HepG2 (cell line): ENCODE measurements at regions of chr15 and their contacts with region 1.

Region 1: GRCh38 chr15:39580117-39580484 is 778 bp upstream of the THBS1 start:
- DNase-seq: peak; percentile 81
- ATAC-seq: peak; percentile 81
- H3K4me3 ChIP-seq: peak overlapping the region; percentile 64 to 88 (median 67)
- H3K27ac ChIP-seq: peak overlapping the region; percentile 65
- H3K4me1 ChIP-seq: peaks cover 50% of the 10 kb centered on the region
- H3K27me3 ChIP-seq: peaks cover 0 to 4% of the 10 kb centered on the region in 2 experiments; a peak in 1 of 5 replicates
- CTCF ChIP-seq: peak; percentile 87
- EP300 ChIP-seq: no peak
- POLR2A ChIP-seq: no peak
- RAD21 ChIP-seq: peak; percentile 92

Region 2: GRCh38 chr15:39125904-39126303 is 454.2 kb before region 1 on chr15:
- CTCF ChIA-PET with region 1: interaction called, 13 read pairs
- POLR2A ChIA-PET with region 1: interaction called, 11 read pairs
- in situ Hi-C with region 1: loop called (anchors 10 kb)
- intact Hi-C with region 1: loop called (anchors 1 kb)
- DNase-seq: peak; percentile 62
- ATAC-seq: no peak
- H3K4me3 ChIP-seq: no peak overlapping the region
- H3K27ac ChIP-seq: no peak overlapping the region
- H3K4me1 ChIP-seq: peaks cover 56% of the 10 kb centered on the region
- H3K27me3 ChIP-seq: no peaks in the 10 kb centered on the region
- CTCF ChIP-seq: peak; percentile 66
- EP300 ChIP-seq: no peak
- POLR2A ChIP-seq: no peak
- RAD21 ChIP-seq: peak; percentile 54; the same call in 1 of the 2 replicates

Region 3: GRCh38 chr15:39213385-39213840 is 366.7 kb before region 1 on chr15:
- CTCF ChIA-PET with region 1: no interaction called
- POLR2A ChIA-PET with region 1: interaction called, 17 read pairs
- in situ Hi-C with region 1: no loop called
- intact Hi-C with region 1: no loop called
- DNase-seq: peak; percentile 94
- ATAC-seq: peak; percentile 95
- H3K4me3 ChIP-seq: no peak overlapping the region
- H3K27ac ChIP-seq: peak overlapping the region; percentile 55
- H3K4me1 ChIP-seq: peaks cover 58% of the 10 kb centered on the region
- H3K27me3 ChIP-seq: no peaks in the 10 kb centered on the region
- CTCF ChIP-seq: no peak
- EP300 ChIP-seq: peak in 1 of 2 experiments; percentile 33; a peak in 1 of 4 replicates
- POLR2A ChIP-seq: no peak
- RAD21 ChIP-seq: no peak

Region 4: GRCh38 chr15:39312984-39313383 is 267.1 kb before region 1 on chr15:
- CTCF ChIA-PET with region 1: interaction called, 8 read pairs
- POLR2A ChIA-PET with region 1: interaction called, 12 read pairs
- in situ Hi-C with region 1: loop called (anchors 5 kb)
- intact Hi-C with region 1: loop called (anchors 1 kb)
- DNase-seq: peak; percentile 77
- ATAC-seq: peak; percentile 95
- H3K4me3 ChIP-seq: no peak overlapping the region
- H3K27ac ChIP-seq: no peak overlapping the region
- H3K4me1 ChIP-seq: peaks cover 14% of the 10 kb centered on the region
- H3K27me3 ChIP-seq: no peaks in the 10 kb centered on the region
- CTCF ChIP-seq: peak; percentile 69
- EP300 ChIP-seq: no peak
- POLR2A ChIP-seq: no peak
- RAD21 ChIP-seq: peak; percentile 52; the same call in 1 of the 2 replicates

Region 5: DNA sequence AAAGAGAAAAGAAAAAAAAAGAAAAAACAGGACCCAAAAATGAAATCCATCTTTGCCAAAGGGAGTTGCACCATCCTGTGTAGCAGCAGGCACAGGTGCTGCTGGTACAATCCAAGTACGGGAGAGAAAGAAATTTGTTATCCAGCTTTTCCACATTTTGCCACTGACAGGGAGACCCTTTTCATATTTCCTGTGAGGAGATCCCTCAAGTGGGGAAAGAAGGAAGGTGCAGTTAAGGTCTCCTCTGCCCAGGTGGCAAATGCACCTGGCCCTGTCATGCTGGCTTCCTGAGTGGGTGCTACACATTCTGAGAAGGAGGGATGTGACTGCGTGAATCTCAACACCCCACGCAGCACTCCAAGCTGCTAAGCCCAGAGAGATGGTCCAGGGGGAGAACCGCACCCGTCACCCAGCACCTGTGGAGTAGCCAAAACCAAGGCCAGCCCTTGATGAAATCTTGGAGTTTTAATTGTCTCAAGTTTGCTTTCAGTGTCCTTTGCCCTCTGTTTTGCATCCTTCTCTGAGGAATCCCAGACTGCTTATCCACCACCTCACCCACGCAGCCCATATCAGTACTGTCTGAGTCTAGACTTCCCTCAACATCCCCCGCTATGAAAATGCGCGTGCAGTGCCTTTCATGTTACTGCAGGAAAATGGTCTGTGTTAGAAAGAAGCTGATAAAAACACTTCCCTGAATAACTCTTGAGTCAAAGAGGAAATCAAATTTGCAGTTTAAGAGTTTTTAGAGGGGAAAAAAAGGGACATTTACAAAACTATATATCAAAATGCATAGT is 141.1 kb before region 1 on chr15:
- CTCF ChIA-PET with region 1: no interaction called
- POLR2A ChIA-PET with region 1: no interaction called
- in situ Hi-C with region 1: loop called (anchors 10 kb)
- intact Hi-C with region 1: loop called (anchors 2 kb)
- DNase-seq: peak; percentile 34
- ATAC-seq: peak; percentile 50; the same call in 2 of the 3 replicates
- H3K4me3 ChIP-seq: no peak overlapping the region
- H3K27ac ChIP-seq: no peak overlapping the region
- H3K4me1 ChIP-seq: peaks cover 40% of the 10 kb centered on the region
- H3K27me3 ChIP-seq: no peaks in the 10 kb centered on the region
- CTCF ChIP-seq: peak; percentile 40
- EP300 ChIP-seq: no peak
- POLR2A ChIP-seq: no peak
- RAD21 ChIP-seq: no peak

Region 6: DNA sequence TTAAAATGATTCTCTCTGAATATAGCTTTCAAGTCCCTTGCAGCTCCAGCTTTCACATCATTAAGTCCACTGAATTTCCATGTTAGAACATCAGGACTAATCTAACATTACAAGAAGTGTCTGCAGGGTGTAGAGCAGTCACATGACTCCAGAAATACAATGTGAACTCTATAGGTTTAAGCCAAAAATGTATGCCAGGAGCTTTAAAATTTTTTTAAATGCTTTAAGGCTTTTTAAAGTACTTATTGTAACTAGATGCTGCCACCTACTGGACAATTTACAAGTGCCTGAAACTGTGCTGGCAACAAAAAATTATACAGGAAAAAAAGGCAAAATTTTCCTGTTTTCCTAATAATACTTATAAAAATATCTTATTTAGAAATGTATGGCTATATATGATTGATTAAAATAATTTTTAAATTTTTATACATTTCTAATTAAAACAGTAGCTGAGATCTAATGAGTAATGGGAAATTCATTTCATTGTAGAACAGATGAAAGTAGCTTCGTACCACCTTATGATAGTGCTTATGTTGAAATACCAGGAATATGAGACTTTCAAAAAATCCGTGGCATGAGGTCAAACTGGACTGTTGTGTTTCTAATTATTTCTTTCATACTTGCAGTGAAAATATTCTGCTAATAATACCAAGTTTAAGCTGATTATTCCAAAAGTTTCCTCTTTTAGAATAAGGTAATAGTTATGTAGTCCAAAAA is 176.9 kb after region 1 on chr15:
- CTCF ChIA-PET with region 1: no interaction called
- POLR2A ChIA-PET with region 1: no interaction called
- in situ Hi-C with region 1: no loop called
- intact Hi-C with region 1: loop called (anchors 5 kb)
- DNase-seq: peak; percentile 43
- ATAC-seq: no peak
- H3K4me3 ChIP-seq: no peak overlapping the region
- H3K27ac ChIP-seq: no peak overlapping the region
- H3K4me1 ChIP-seq: no peaks in the 10 kb centered on the region
- H3K27me3 ChIP-seq: no peaks in the 10 kb centered on the region
- CTCF ChIP-seq: peak; percentile 47
- EP300 ChIP-seq: no peak
- POLR2A ChIP-seq: no peak
- RAD21 ChIP-seq: 0 out of 2 replicates have a peak, but pooled peaks have one; percentile 24